ENCODE measurements at regions of chr10 and their contacts with region 1.

Region 1: GRCh38 chr10:48363617-48364355 is 57.3 kb downstream of the MAPK8 start:
- DNase-seq: peak; percentile 82
- H3K4me3 ChIP-seq: no peak overlapping the region
- H3K27ac ChIP-seq: no peak overlapping the region
- H3K4me1 ChIP-seq: peaks cover 31% of the 10 kb centered on the region
- H3K27me3 ChIP-seq: no peaks in the 10 kb centered on the region
- CTCF ChIP-seq: peak; percentile 79

Region 2: DNA sequence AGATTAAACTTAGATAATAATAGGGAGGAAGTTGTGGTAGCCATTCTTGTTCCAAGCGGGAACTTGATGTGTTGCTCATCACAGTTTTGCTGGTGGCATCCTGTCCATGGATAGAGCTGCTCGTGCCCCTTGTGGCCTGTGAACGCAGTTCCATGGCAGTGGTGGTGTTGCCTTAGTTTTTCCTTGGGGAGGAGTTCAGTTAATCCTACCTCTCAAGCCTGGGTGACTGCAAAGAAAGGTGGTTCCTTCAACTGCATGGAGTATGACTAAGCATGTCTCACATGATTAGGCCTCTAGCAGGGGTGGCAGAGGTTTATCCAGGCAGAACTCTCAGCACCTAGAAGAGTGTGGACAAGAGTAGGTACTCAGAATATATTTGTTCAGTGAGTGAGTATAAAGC is 42.4 kb after region 1 on chr10:
- CTCF ChIA-PET with region 1: no interaction called
- POLR2A ChIA-PET with region 1: no interaction called
- intact Hi-C with region 1: no loop called
- DNase-seq: peak; percentile 9
- H3K4me3 ChIP-seq: no peak overlapping the region
- H3K27ac ChIP-seq: no peak overlapping the region
- H3K4me1 ChIP-seq: peaks cover 33% of the 10 kb centered on the region
- H3K27me3 ChIP-seq: no peaks in the 10 kb centered on the region
- CTCF ChIP-seq: no peak

Region 3: GRCh38 chr10:48444266-48444665 is 80.5 kb after region 1 on chr10:
- CTCF ChIA-PET with region 1: interaction called, 3 read pairs
- POLR2A ChIA-PET with region 1: no interaction called
- intact Hi-C with region 1: loop called (anchors 1 kb)
- DNase-seq: peak; percentile 90
- H3K4me3 ChIP-seq: no peak overlapping the region
- H3K27ac ChIP-seq: no peak overlapping the region
- H3K4me1 ChIP-seq: peaks cover 18% of the 10 kb centered on the region
- H3K27me3 ChIP-seq: no peaks in the 10 kb centered on the region
- CTCF ChIP-seq: peak; percentile 64

Region 4: DNA sequence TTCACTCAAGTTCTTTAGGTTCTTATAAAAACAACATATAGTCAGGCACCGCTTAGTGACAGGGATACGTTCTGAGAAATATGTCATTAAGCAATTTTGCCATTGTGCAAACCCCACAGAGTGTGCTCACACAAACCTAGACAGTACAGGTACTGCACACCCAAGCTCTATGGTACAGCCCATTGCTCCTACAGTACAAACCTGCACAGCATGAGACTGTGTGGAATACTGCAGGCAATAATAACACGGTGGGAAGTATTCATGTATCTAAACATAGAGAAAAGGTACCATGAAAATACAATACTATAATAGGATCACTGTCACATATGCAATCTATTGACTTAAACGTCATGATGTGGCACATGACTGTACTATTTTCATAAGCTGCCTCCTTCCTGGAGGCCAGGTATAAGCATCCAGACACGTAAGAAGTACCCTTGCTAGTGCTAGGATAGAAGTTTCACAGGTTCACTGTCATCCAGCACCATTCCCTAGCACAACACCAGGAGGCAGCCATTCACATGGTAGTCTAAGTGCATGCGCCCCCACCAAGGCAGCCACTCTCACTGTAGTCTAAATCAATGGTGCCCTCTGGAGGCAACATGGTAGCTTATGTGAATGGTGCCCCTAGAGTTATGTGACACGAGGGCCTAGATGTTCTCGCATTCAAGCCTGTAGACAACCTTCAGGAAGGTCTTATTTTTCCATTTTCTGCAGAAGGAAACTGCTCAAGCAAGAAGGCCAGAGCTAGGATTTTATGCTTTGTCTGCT is 142.5 kb after region 1 on chr10:
- CTCF ChIA-PET with region 1: interaction called, 9 read pairs
- POLR2A ChIA-PET with region 1: no interaction called
- intact Hi-C with region 1: loop called (anchors 1 kb)
- DNase-seq: peak; percentile 66
- H3K4me3 ChIP-seq: no peak overlapping the region
- H3K27ac ChIP-seq: no peak overlapping the region
- H3K4me1 ChIP-seq: no peaks in the 10 kb centered on the region
- H3K27me3 ChIP-seq: no peaks in the 10 kb centered on the region
- CTCF ChIP-seq: peak; percentile 53

Region 5: GRCh38 chr10:49164559-49165188 is 800.9 kb after region 1 on chr10:
- CTCF ChIA-PET with region 1: no interaction called
- POLR2A ChIA-PET with region 1: no interaction called
- intact Hi-C with region 1: loop called (anchors 10 kb)
- DNase-seq: peak; percentile 47
- H3K4me3 ChIP-seq: no peak overlapping the region
- H3K27ac ChIP-seq: no peak overlapping the region
- H3K4me1 ChIP-seq: no peaks in the 10 kb centered on the region
- H3K27me3 ChIP-seq: peaks cover 1% of the 10 kb centered on the region
- CTCF ChIP-seq: peak; percentile 70

Region 6: DNA sequence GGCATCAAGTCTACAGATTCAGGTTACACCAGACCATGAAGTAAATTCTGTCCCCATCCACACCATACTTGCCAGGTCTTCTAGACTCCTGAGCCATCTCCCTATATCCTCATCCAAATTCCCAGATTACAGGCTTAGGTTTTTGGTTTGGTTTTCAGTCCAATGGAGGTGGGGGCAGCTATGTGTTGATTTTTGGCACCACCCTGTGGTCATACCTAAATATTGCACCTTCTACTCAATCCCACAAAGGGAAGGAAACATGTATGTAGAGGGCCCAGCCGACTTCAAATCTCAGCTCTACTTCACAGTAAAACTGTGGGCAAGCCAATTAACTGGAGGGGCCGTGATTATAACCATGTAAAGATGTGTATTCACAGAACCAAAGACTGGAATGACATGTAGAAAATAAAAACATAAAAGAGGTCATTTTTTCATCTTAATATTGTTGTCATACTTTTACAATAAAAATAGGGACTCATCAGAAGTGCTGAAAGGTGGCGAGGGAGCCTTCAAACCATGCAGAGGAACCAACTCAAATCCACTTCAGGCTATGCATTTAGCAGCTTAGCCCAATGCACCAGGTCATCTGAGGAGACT is 1155.3 kb after region 1 on chr10:
- CTCF ChIA-PET with region 1: no interaction called
- POLR2A ChIA-PET with region 1: no interaction called
- intact Hi-C with region 1: loop called (anchors 5 kb)
- DNase-seq: peak; percentile 67
- H3K4me3 ChIP-seq: no peak overlapping the region
- H3K27ac ChIP-seq: no peak overlapping the region
- H3K4me1 ChIP-seq: no peaks in the 10 kb centered on the region
- H3K27me3 ChIP-seq: no peaks in the 10 kb centered on the region
- CTCF ChIP-seq: peak; percentile 74